Calu3 (cell line): ENCODE measurements at regions of chr3 and their contacts with region 1.

Region 1: DNA sequence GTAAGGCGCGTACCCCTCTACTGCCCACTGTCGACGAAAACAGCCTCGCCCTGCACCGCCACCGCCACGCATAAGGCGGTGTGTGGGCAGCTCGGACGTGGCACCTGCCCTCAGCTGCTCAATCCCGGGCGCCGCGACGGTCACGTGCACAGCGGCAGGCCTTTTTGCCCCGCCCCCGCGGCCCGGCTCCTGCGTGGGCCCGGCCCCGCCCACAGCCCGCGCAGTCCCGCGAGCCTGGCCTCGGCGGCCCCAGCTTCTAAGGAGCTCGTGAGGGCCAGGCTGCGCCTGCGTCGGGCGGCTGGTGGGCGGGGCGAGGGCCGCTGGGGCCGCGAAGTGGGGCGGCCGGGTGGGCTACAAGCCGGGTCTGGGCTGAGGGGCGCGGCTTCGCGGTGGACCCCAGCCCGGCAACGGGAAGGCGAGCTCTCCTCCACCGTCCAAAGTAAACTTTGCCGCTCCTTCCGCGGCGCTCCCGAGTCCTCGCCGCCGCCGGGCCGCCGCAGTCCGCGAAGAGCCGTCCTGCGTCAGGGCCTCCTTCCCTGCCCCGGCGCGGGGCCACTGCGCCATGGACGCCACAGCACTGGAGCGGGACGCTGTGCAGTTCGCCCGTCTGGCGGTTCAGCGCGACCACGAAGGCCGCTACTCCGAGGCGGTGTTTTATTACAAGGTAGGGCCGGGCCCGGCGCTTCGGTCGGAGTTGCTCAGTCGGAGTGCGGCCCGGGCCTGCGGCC is at the start of gene CAPN7:
- DNase-seq: peak; percentile 97
- H3K4me3 Mint-ChIP-seq: peak within 1 kb of the TSS; percentile 74
- H3K27ac Mint-ChIP-seq: peak within 1 kb of the TSS; percentile 79
- H3K4me1 Mint-ChIP-seq: no peaks in the 10 kb centered on the region
- H3K27me3 Mint-ChIP-seq: no peaks in the 10 kb centered on the region
- CTCF ChIP-seq: peak; percentile 30
- total RNA-seq, gene CAPN7: 24.1 and 24.8 TPM in 2 replicates

Region 2: GRCh38 chr3:14488563-14489041 is 717.5 kb before region 1 on chr3:
- CTCF ChIA-PET with region 1: no interaction called
- intact Hi-C with region 1: no loop called
- DNase-seq: no peak
- H3K4me3 Mint-ChIP-seq: no peak overlapping the region
- H3K27ac Mint-ChIP-seq: no peak overlapping the region
- H3K4me1 Mint-ChIP-seq: no peaks in the 10 kb centered on the region
- H3K27me3 Mint-ChIP-seq: no peaks in the 10 kb centered on the region
- CTCF ChIP-seq: no peak

Region 3: DNA sequence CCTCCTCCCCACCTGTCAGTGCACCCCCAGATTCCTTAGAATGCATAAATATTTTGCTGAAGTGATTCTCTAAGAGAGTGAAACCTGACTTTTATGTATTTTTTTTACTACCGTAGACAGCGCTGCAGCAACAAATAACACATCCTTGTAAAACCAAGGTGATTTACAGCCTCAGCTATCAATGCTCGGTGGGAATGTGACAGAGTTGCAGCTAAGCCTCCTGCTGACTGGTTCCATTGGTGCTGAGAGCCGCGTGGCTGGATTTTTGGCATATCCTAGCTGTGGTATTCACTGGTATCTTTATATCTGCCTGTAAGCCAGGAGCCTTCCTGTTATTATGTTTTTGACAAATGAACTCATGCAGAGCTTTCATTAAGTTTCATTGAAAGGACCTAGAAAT is 376.3 kb before region 1 on chr3:
- CTCF ChIA-PET with region 1: no interaction called
- intact Hi-C with region 1: no loop called
- DNase-seq: no peak
- H3K4me3 Mint-ChIP-seq: no peak overlapping the region
- H3K27ac Mint-ChIP-seq: no peak overlapping the region
- H3K4me1 Mint-ChIP-seq: no peaks in the 10 kb centered on the region
- H3K27me3 Mint-ChIP-seq: peaks cover 94% of the 10 kb centered on the region
- CTCF ChIP-seq: no peak

Region 4: GRCh38 chr3:15108082-15108545 is 98.0 kb before region 1 on chr3:
- CTCF ChIA-PET with region 1: interaction called, 11 read pairs
- intact Hi-C with region 1: loop called (anchors 5 kb)
- DNase-seq: peak; percentile 80
- H3K4me3 Mint-ChIP-seq: no peak overlapping the region
- H3K27ac Mint-ChIP-seq: no peak overlapping the region
- H3K4me1 Mint-ChIP-seq: peaks cover 13% of the 10 kb centered on the region
- H3K27me3 Mint-ChIP-seq: peaks cover 35% of the 10 kb centered on the region
- CTCF ChIP-seq: peak; percentile 86